ENCODE measurements at regions of chr1 and their contacts with region 1.

Region 1: GRCh38 chr1:237799762-237800474 is 90.8 kb downstream of the ZP4 start:
- DNase-seq: peak; percentile 92 to 93
- H3K4me3 ChIP-seq: no peak overlapping the region
- H3K4me3 Mint-ChIP-seq: no peak overlapping the region
- H3K27ac Mint-ChIP-seq: no peak overlapping the region
- H3K4me1 ChIP-seq: peaks cover 7% of the 10 kb centered on the region; the same call in 1 of the 2 replicates
- H3K4me1 Mint-ChIP-seq: peaks cover 6% of the 10 kb centered on the region
- H3K27me3 ChIP-seq: no peaks in the 10 kb centered on the region
- H3K27me3 Mint-ChIP-seq: no peaks in the 10 kb centered on the region
- CTCF ChIP-seq: peak; percentile 66 to 72

Region 2: GRCh38 chr1:237562242-237562823 is 237.6 kb before region 1 on chr1:
- CTCF ChIA-PET with region 1: interaction called, 8 read pairs
- POLR2A ChIA-PET with region 1: no interaction called
- intact Hi-C with region 1: loop called (anchors 1 kb)
- DNase-seq: peak in 1 of 2 experiments; percentile 55
- H3K4me3 ChIP-seq: no peak overlapping the region
- H3K4me3 Mint-ChIP-seq: no peak overlapping the region
- H3K27ac Mint-ChIP-seq: no peak overlapping the region
- H3K4me1 ChIP-seq: no peaks in the 10 kb centered on the region
- H3K4me1 Mint-ChIP-seq: peaks cover 6% of the 10 kb centered on the region
- H3K27me3 ChIP-seq: no peaks in the 10 kb centered on the region
- H3K27me3 Mint-ChIP-seq: peaks cover 9% of the 10 kb centered on the region
- CTCF ChIP-seq: peak; percentile 46 to 48

Region 3: DNA sequence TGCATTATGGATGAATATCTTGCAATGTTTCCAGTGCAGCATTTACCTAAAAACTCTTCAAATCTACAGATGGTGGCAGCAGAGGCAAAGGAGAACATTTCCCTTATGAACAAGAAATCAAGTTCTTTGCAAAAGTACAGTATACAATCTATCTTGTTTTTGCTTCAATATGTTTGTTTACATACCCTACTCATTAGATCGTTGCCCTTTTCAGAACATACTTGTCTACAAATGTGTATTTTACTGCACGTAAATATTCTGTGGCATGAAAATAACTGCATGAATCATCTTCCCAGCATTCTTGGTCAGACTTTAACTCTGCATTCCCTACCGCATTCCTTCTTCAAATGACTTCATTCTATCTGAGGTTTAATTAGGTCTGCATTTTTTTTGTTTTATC is 121.9 kb before region 1 on chr1:
- CTCF ChIA-PET with region 1: interaction called, 15 read pairs
- POLR2A ChIA-PET with region 1: no interaction called
- intact Hi-C with region 1: loop called (anchors 1 kb)
- DNase-seq: peak in 1 of 2 experiments; percentile 26
- H3K4me3 ChIP-seq: no peak overlapping the region
- H3K4me3 Mint-ChIP-seq: no peak overlapping the region
- H3K27ac Mint-ChIP-seq: no peak overlapping the region
- H3K4me1 ChIP-seq: no peaks in the 10 kb centered on the region
- H3K4me1 Mint-ChIP-seq: peaks cover 8% of the 10 kb centered on the region
- H3K27me3 ChIP-seq: no peaks in the 10 kb centered on the region
- H3K27me3 Mint-ChIP-seq: no peaks in the 10 kb centered on the region
- CTCF ChIP-seq: peak; percentile 19 to 44

Region 4: DNA sequence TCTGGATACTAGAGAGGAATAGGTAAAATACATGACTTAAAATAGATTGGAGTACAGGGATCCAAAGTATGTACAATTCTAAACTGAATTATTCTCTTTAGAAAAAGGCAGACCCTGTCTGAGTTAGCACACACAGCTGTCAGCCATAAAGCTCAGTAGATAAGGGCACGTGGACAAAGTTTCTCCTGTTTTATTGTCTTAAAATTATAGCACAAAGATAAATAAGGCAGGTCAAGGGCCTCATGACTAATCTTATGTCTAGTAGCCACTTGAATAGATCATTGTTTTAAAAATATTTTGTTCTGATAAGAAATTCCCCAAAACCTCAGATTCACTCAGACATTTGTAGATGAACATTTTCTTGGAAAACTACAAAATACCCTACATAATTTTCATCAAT is 114.4 kb before region 1 on chr1:
- CTCF ChIA-PET with region 1: interaction called, 10 read pairs
- POLR2A ChIA-PET with region 1: no interaction called
- intact Hi-C with region 1: no loop called
- DNase-seq: peak in 1 of 2 experiments; percentile 17
- H3K4me3 ChIP-seq: no peak overlapping the region
- H3K4me3 Mint-ChIP-seq: no peak overlapping the region
- H3K27ac Mint-ChIP-seq: no peak overlapping the region
- H3K4me1 ChIP-seq: peaks cover 25% of the 10 kb centered on the region
- H3K4me1 Mint-ChIP-seq: peaks cover 29% of the 10 kb centered on the region
- H3K27me3 ChIP-seq: no peaks in the 10 kb centered on the region
- H3K27me3 Mint-ChIP-seq: no peaks in the 10 kb centered on the region
- CTCF ChIP-seq: no peak

Measured in Caco-2 (cell line).